Activated CD4-positive, alpha-beta memory T cell treated with anti-CD3 and anti-CD28 coated beads for 36 hours (primary cell): ENCODE measurements at regions of chr1 and their contacts with region 1.

Region 1: DNA sequence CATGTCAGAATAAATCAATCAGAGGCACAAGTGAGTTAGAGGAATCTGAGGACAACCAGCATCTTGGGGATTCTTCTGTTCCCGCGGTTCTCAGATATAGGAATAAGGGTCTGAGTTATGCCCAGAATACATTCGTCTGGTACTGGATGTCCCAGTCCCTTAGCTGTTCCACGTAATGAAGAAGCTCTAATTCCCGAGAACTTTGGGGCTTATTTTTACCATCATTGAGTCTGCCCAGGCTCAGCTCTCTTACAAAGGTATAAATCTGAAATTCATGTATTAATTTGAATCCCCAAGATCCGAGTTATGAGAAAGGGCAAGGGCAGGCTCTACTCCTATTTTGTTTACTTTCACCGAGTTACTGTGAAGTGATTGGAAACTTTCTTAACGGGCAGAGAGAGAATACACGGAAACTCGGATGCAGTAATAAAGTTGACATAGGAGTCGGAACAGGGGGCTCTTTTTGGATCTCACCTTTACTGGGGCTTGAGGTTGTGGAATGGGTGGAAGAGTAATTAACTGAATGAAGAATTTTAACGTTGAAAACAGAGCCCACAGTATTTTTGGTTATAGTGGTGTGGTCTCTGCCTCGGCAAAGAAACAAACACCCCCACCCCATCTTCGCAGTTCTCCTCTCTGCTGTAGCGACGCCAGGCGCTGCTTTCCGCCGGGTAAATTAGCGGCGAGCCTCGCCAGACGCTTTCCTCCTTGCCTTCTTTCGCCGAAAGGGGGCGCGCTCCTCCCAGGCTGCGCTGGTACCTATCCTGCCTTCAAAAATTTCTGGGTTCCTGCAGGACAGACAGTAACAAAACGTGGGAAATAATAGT is 7.1 kb downstream of the PRRX1 start:
- DNase-seq: peak; percentile 57
- H3K4me3 Mint-ChIP-seq: no peak overlapping the region
- H3K27ac Mint-ChIP-seq: no peak overlapping the region
- H3K4me1 Mint-ChIP-seq: peaks cover 16% of the 10 kb centered on the region
- H3K27me3 Mint-ChIP-seq: peaks cover 66% of the 10 kb centered on the region

Region 2: GRCh38 chr1:170687621-170688020 is 16.6 kb after region 1 on chr1:
- CTCF ChIA-PET with region 1: interaction called, 11 read pairs
- POLR2A ChIA-PET with region 1: no interaction called
- intact Hi-C with region 1: no loop called
- DNase-seq: no peak
- H3K4me3 Mint-ChIP-seq: no peak overlapping the region
- H3K27ac Mint-ChIP-seq: no peak overlapping the region
- H3K4me1 Mint-ChIP-seq: no peaks in the 10 kb centered on the region
- H3K27me3 Mint-ChIP-seq: peaks cover 16% of the 10 kb centered on the region

Region 3: GRCh38 chr1:170840371-170840770 is 169.4 kb after region 1 on chr1:
- CTCF ChIA-PET with region 1: no interaction called
- POLR2A ChIA-PET with region 1: no interaction called
- intact Hi-C with region 1: no loop called
- DNase-seq: no peak
- H3K4me3 Mint-ChIP-seq: no peak overlapping the region
- H3K27ac Mint-ChIP-seq: no peak overlapping the region
- H3K4me1 Mint-ChIP-seq: no peaks in the 10 kb centered on the region
- H3K27me3 Mint-ChIP-seq: peaks cover 4% of the 10 kb centered on the region

Region 4: DNA sequence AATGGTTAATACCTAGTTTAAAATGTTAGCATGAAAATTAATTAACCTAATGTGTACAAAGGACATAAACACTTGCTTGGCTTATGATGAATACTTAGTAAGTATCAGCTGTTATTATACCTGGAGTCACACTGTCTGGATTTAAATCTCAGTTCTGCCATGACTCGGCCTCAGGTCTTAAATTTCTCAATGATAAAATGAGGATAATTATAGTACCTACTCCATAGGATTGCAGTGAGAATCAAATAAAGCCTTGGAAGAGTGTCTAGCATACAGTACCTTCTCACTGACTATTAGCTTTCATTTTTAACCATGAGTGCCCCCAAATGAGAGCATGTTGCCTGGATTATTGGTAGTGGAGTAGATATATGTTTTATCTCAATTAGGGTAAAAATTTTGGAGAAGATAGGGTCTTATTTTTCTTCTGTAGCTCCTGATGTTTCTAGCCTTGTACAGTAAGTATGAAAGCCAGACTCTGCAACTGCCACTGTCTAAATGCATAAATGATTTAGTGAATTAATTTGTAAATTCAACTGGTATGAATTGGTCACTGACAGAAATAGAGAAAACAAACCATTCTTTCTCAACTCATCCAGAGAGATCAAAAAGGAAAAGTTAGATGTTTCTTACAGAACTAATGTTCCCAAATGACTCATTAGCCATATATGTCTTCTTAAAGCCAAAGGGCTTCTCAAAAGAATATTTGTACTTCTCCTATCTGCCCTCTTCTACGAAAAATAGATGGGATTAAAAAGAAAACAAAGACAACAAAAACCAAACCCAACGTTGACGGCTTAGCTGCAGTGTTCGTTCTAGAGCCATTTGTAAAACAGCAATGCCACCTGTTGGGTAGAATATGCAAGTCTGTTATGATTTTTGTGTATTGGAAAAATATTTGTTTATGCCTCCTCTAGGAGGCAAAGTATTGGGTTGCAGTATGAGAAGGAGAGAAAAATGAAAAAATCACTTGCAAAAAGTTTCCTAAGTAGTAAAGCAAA is 210.6 kb after region 1 on chr1:
- CTCF ChIA-PET with region 1: no interaction called
- POLR2A ChIA-PET with region 1: no interaction called
- intact Hi-C with region 1: loop called (anchors 5 kb)
- DNase-seq: no peak
- H3K4me3 Mint-ChIP-seq: no peak overlapping the region
- H3K27ac Mint-ChIP-seq: no peak overlapping the region
- H3K4me1 Mint-ChIP-seq: no peaks in the 10 kb centered on the region
- H3K27me3 Mint-ChIP-seq: peaks cover 3% of the 10 kb centered on the region

Region 5: DNA sequence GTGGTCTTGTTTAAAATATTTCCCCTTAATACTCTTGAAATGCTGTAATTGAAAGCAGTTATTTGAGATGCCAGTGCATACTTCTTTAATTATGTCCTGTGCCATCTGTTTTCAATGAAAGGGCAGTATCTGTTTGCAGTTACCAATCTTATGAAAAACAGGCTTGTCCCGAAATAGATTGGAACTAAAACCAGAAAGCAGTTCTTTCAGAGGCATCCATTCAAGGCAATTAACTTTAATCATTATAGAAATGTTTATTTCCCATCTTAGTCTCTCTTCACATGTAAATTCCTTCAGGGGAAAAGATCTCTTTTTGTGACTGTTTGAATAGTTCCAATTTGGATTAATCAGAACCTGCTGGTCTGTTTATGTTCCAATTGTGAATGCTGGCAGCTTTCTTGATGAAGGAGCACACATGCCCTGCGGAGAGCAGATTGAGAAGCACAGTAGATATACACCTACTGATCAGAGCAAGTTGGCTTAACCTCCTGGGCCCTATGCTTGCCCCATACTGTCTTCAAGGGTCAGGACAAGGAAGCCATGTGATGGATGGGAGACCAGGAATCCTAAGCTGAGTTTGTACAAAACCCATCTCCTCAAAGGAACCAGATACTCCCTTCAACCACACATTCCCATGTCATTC is 222.8 kb after region 1 on chr1:
- CTCF ChIA-PET with region 1: no interaction called
- POLR2A ChIA-PET with region 1: no interaction called
- intact Hi-C with region 1: no loop called
- DNase-seq: no peak
- H3K4me3 Mint-ChIP-seq: no peak overlapping the region
- H3K27ac Mint-ChIP-seq: no peak overlapping the region
- H3K4me1 Mint-ChIP-seq: no peaks in the 10 kb centered on the region
- H3K27me3 Mint-ChIP-seq: peaks cover 21% of the 10 kb centered on the region